ENCODE measurements at regions of chr22 and their contacts with region 1.

Region 1: GRCh38 chr22:32474635-32475467 is at the start of gene FBXO7:
- DNase-seq: peak; percentile 80
- ATAC-seq: peak; percentile 83
- H3K4me3 ChIP-seq: peak within 1 kb of the TSS; percentile 69 to 79
- H3K27ac ChIP-seq: peak within 1 kb of the TSS; percentile 98
- H3K4me1 ChIP-seq: peaks cover 18 to 20% of the 10 kb centered on the region in 2 experiments
- H3K27me3 ChIP-seq: no peaks in the 10 kb centered on the region
- CTCF ChIP-seq: 0 out of 6 replicates have a peak, but pooled peaks of 1 of the 3 experiments have one; percentile 3
- POLR2A ChIP-seq: peak; percentile 74
- RAD21 ChIP-seq: no peak
- total RNA-seq, gene FBXO7: 69.2 TPM

Region 2: GRCh38 chr22:32202539-32203180 is 272.2 kb before region 1 on chr22:
- CTCF ChIA-PET with region 1: no interaction called
- POLR2A ChIA-PET with region 1: no interaction called
- RAD21 ChIA-PET with region 1: no interaction called
- intact Hi-C with region 1: loop called (anchors 10 kb)
- DNase-seq: peak; percentile 50
- ATAC-seq: peak; percentile 55
- H3K4me3 ChIP-seq: no peak overlapping the region
- H3K27ac ChIP-seq: no peak overlapping the region
- H3K4me1 ChIP-seq: peaks cover 27 to 45% of the 10 kb centered on the region in 2 experiments
- H3K27me3 ChIP-seq: no peaks in the 10 kb centered on the region
- CTCF ChIP-seq: peak; percentile 62 to 73 (median 72); a peak in 5 of 6 replicates
- POLR2A ChIP-seq: no peak
- RAD21 ChIP-seq: peak; percentile 43; the same call in 1 of the 2 replicates

Region 3: GRCh38 chr22:32311551-32312071 is 163.2 kb before region 1 on chr22:
- CTCF ChIA-PET with region 1: no interaction called
- POLR2A ChIA-PET with region 1: no interaction called
- RAD21 ChIA-PET with region 1: no interaction called
- intact Hi-C with region 1: no loop called
- DNase-seq: no peak
- ATAC-seq: no peak
- H3K4me3 ChIP-seq: no peak overlapping the region
- H3K27ac ChIP-seq: no peak overlapping the region
- H3K4me1 ChIP-seq: no peaks in the 10 kb centered on the region; a peak in 1 of 4 replicates
- H3K27me3 ChIP-seq: no peaks in the 10 kb centered on the region
- CTCF ChIP-seq: no peak
- POLR2A ChIP-seq: no peak
- RAD21 ChIP-seq: no peak

Region 4: GRCh38 chr22:32413719-32414118 is 61.1 kb before region 1 on chr22:
- CTCF ChIA-PET with region 1: interaction called, 6 read pairs
- POLR2A ChIA-PET with region 1: no interaction called
- RAD21 ChIA-PET with region 1: no interaction called
- intact Hi-C with region 1: loop called (anchors 1 kb)
- DNase-seq: peak; percentile 27
- ATAC-seq: peak; percentile 45; the same call in 1 of the 2 replicates
- H3K4me3 ChIP-seq: no peak overlapping the region
- H3K27ac ChIP-seq: no peak overlapping the region
- H3K4me1 ChIP-seq: peaks cover 12 to 21% of the 10 kb centered on the region in 2 experiments; a peak in 2 of 4 replicates
- H3K27me3 ChIP-seq: peaks cover 14% of the 10 kb centered on the region
- CTCF ChIP-seq: peak; percentile 21 to 63 (median 53); a peak in 4 of 6 replicates
- POLR2A ChIP-seq: no peak
- RAD21 ChIP-seq: peak; percentile 39; the same call in 1 of the 2 replicates

Region 5: DNA sequence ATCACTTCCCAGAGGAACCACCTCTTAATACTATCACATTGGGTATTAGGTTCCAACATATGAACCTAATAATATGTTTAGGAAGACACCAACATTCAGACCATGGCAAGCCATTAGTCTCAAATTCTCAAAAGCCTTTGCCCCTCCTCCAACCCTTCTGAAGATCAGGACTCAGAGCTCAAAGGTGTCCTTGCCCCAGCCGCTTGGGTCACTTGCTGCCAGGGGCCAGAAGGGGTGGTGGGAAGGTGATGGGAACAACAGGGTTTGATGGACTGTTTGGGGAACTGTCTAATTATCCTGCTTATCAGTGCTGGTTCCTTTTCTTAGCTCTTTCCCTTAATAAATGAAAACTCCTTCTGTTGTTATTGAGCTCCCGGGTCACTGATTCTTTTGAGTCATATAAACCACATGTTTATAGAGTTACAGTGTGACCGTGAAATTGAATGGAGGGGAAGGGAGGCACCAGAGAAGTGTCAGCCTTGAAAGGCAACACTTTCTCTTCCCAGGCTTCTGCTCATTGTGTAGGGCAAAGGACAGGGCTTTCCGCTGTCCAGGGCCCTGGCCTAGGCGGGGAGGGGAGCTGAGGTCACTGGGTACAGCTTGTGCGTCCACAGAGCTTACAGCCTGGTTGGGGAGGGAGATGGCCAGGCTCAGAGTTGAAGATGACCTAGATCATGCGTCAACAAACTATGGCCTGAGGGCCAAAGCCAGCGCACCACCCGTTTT is 104.8 kb after region 1 on chr22:
- CTCF ChIA-PET with region 1: no interaction called
- POLR2A ChIA-PET with region 1: no interaction called
- RAD21 ChIA-PET with region 1: no interaction called
- intact Hi-C with region 1: no loop called
- DNase-seq: no peak
- ATAC-seq: no peak
- H3K4me3 ChIP-seq: no peak overlapping the region
- H3K27ac ChIP-seq: no peak overlapping the region
- H3K4me1 ChIP-seq: no peaks in the 10 kb centered on the region
- H3K27me3 ChIP-seq: no peaks in the 10 kb centered on the region
- CTCF ChIP-seq: no peak
- POLR2A ChIP-seq: no peak
- RAD21 ChIP-seq: no peak

Region 6: GRCh38 chr22:32684822-32685187 is 210.0 kb after region 1 on chr22:
- CTCF ChIA-PET with region 1: no interaction called
- POLR2A ChIA-PET with region 1: no interaction called
- RAD21 ChIA-PET with region 1: no interaction called
- intact Hi-C with region 1: no loop called
- DNase-seq: no peak
- ATAC-seq: no peak
- H3K4me3 ChIP-seq: no peak overlapping the region
- H3K27ac ChIP-seq: no peak overlapping the region
- H3K4me1 ChIP-seq: no peaks in the 10 kb centered on the region
- H3K27me3 ChIP-seq: peaks cover 9% of the 10 kb centered on the region; the same call in 1 of the 2 replicates
- CTCF ChIP-seq: no peak
- POLR2A ChIP-seq: no peak
- RAD21 ChIP-seq: no peak

Measured in HCT116 (cell line).